Psoas muscle (tissue), 8 donors: ENCODE measurements at regions of chr11 and their contacts with region 1.

Region 1: DNA sequence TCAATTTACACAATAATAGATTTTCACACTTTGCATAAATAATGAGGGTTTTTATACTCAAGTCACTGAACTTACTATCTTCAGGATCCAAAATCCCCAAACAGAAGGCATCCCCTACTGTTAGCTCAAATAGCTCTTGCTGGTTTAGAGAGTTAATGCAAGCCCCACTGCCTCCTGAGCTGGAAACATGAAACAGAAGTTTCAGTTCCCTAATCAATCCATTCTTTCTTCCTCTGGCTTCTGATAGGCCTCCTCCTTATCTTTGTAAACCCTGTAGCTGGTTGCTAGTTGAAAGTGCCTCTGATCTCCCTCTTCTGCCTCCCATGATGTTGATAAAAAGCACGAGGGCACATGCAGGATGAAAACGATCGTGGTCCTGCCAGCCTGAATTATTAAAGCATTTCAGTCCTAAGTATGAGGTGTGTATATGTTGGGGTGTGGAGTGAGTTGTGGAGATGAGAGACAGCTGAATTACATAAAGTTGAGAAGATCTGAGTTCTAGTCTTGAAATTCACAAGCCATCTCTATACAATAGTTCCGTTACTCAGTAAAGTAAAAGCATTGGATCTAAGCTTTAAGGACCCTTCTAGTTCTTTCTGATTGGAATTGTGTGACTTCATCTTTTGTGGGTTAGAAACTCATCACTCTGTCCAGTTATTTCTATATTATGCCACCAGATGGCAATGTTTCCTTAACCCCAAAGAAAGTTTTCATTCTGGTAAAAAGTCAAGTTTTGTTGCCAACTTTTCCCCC is 35.0 kb upstream of the EHF start:
- DNase-seq: no peak
- ATAC-seq: peak; percentile 56 to 83 (median 64)
- H3K4me3 ChIP-seq: peak overlapping the region; percentile 35
- H3K27ac ChIP-seq: no peak overlapping the region
- H3K4me1 ChIP-seq: peaks cover 3% of the 10 kb centered on the region
- H3K27me3 ChIP-seq: peaks cover 0 to 3% (median 0%) of the 10 kb centered on the region in 3 donors
- CTCF ChIP-seq: peak; percentile 74

Region 2: DNA sequence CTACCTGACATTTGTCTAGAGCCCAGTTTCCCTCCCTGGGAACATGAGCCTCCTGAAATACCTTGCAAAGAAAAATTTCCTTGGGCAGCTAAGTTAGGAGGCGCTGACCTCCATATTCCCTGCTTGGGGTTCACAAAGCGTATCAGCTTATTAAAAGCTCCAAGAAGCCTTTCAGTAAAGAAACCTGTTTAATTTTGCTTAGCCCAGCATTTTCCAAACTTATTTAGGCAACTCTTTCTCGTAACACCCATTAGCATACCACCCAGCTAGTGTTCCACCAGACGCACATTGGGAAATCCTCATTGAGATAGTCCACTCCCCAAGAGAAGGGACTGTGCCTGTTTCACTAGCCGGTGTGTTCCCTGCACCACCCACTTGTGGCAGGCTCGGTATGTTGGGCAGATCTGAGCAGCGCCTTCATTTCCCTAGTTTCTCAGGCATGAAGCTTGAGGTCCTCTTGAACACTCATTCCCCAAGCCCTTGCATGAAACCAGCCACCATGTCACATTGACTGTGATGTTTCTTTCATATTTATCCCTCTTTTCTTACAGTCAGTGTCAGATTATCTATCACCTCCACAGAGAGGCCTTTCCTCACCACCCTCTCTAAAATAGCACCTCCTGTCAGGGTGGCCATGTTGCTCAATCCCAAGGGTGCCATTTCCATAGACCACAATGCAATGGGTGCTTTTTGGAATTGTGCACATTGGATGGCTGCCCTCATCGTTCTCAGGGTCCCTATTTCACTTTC is 59.8 kb before region 1 on chr11:
- intact Hi-C with region 1: no loop called
- DNase-seq: no peak
- ATAC-seq: no peak
- H3K4me3 ChIP-seq: no peak overlapping the region
- H3K27ac ChIP-seq: no peak overlapping the region
- H3K4me1 ChIP-seq: no peaks in the 10 kb centered on the region
- H3K27me3 ChIP-seq: no peaks in the 10 kb centered on the region
- CTCF ChIP-seq: no peak

Region 3: DNA sequence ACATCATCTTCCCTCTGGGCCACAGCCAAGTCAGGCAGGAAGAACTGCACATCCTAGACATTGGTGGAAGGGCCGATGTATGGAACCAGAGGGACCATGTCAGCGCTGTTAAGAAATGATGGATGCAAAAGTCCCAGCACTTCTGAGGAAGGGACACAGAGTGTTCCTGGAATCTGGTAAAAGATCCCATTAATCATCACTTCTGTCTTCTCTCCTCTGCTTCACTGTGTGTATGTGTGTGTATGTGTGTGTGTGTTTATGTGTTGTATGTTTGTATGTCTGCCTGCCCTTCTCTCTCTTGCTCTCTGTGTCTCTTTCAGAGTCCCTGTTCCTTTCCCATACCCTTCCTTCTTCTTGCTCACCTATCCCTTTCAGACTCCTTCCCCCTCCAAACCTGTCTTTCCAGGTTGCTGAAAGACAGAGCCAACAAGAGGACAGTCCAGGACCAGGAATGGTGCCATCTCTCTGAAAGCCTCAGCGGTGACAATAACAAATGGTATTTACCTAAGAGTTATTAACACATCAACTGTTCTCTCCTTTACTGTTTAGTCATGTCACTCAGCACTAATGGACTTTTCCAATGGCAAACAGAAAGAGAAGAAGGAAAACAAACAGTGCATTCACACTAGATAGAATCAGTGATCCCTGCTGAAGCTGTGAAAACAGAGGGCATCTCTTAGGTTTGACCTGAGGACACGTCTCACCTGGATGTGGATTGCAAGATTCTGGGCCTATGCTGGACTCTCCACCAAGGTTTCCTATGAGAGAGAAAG is 82.1 kb after region 1 on chr11:
- intact Hi-C with region 1: loop called in 1 of 2 experiments (anchors 5 kb)
- DNase-seq: no peak
- ATAC-seq: peak in 1 of 4 donors; percentile 83
- H3K4me3 ChIP-seq: no peak overlapping the region
- H3K27ac ChIP-seq: no peak overlapping the region
- H3K4me1 ChIP-seq: no peaks in the 10 kb centered on the region
- H3K27me3 ChIP-seq: no peaks in the 10 kb centered on the region
- CTCF ChIP-seq: no peak

Region 4: GRCh38 chr11:34749666-34750659 is 164.1 kb after region 1 on chr11:
- intact Hi-C with region 1: loop called in 1 of 2 experiments (anchors 10 kb)
- DNase-seq: peak; percentile 80 to 89
- ATAC-seq: peak; percentile 68 to 92 (median 88)
- H3K4me3 ChIP-seq: peak overlapping the region; percentile 22
- H3K27ac ChIP-seq: peak overlapping the region; percentile 9
- H3K4me1 ChIP-seq: peaks cover 38% of the 10 kb centered on the region
- H3K27me3 ChIP-seq: no peaks in the 10 kb centered on the region
- CTCF ChIP-seq: no peak

Region 5: DNA sequence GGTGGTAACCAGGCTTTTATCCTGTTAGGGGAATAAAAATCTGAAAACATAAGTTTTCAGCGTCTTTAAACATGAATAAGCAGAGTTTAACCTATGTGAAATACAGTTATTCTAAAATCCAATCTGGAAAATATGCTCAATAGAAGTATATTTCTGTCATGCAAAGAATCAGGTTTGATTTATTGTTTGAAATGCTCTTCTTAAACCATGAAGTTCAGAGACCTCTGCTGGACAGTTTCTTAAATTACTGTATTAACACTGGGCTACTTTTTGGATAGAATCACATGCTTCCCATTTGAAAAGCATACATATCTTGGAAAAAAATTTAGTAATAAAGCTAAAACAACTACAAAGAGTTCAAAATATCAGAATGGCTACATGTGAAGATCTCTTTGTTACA is 304.9 kb after region 1 on chr11:
- intact Hi-C with region 1: loop called (anchors 2 to 5 kb)
- DNase-seq: no peak
- ATAC-seq: peak in 3 of 4 donors; percentile 54 to 78 (median 55)
- H3K4me3 ChIP-seq: no peak overlapping the region
- H3K27ac ChIP-seq: no peak overlapping the region
- H3K4me1 ChIP-seq: peaks cover 4% of the 10 kb centered on the region
- H3K27me3 ChIP-seq: no peaks in the 10 kb centered on the region
- CTCF ChIP-seq: peak; percentile 62

Region 6: GRCh38 chr11:35412285-35412684 is 826.4 kb after region 1 on chr11:
- intact Hi-C with region 1: loop called in 1 of 2 experiments (anchors 5 kb)
- DNase-seq: no peak
- ATAC-seq: no peak
- H3K4me3 ChIP-seq: no peak overlapping the region
- H3K27ac ChIP-seq: no peak overlapping the region
- H3K4me1 ChIP-seq: no peaks in the 10 kb centered on the region
- H3K27me3 ChIP-seq: peaks cover 0 to 18% (median 0%) of the 10 kb centered on the region in 3 donors
- CTCF ChIP-seq: peak; percentile 13